ENCODE measurements at regions of chr6 and their contacts with region 1.

Region 1: GRCh38 chr6:133512410-133513016 is 271.4 kb downstream of the EYA4 start:
- DNase-seq: peak; percentile 70
- H3K4me3 ChIP-seq: no peak overlapping the region
- H3K27ac ChIP-seq: no peak overlapping the region
- H3K4me1 ChIP-seq: no peaks in the 10 kb centered on the region
- H3K27me3 ChIP-seq: peaks cover 21% of the 10 kb centered on the region

Region 2: DNA sequence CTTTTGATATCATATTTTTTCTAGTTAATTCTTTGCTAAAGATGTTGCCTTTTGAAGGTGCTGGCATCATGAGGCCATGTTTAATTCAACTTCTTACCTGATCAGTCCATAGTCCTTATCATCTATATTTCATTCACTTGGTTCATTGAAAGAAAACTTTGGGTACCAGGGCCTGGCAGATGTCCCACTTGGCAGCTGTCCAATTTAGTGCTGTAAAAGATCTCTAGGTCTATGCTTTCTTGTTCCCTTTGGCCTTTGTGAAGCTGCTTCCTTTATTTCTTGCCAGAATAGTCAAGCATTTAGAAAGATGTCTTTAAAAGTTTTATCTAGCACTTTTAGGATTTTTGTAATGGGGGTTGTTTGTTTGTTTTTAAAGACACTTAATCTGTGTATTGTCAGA is 333.0 kb before region 1 on chr6:
- in situ Hi-C with region 1: loop called (anchors 10 kb)
- DNase-seq: no peak
- H3K4me3 ChIP-seq: no peak overlapping the region
- H3K27ac ChIP-seq: no peak overlapping the region
- H3K4me1 ChIP-seq: no peaks in the 10 kb centered on the region
- H3K27me3 ChIP-seq: peaks cover 9% of the 10 kb centered on the region

Region 3: DNA sequence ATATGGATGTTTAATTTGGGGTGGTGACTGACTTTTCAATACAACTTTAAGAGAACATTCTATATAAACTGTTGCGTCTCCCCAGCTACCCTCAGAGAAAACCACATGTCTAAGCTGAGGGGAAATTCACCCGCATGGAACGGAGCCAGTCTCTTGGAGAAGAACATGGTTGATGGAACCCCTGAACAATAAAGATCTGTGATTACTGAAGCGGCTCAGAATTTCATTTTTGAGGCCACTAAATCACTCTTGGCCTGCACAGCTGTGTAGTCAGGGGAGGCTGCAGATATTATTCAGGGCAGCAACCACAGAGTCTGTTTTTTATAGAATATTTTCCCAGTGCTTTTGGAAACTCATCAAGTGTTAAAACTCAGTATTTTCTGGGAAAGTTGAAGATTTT is 197.6 kb before region 1 on chr6:
- in situ Hi-C with region 1: no loop called
- DNase-seq: no peak
- H3K4me3 ChIP-seq: no peak overlapping the region
- H3K27ac ChIP-seq: no peak overlapping the region
- H3K4me1 ChIP-seq: no peaks in the 10 kb centered on the region
- H3K27me3 ChIP-seq: peaks cover 17% of the 10 kb centered on the region; the same call in 1 of the 2 replicates